ENCODE measurements at regions of chr12 and their contacts with region 1.

Region 1: DNA sequence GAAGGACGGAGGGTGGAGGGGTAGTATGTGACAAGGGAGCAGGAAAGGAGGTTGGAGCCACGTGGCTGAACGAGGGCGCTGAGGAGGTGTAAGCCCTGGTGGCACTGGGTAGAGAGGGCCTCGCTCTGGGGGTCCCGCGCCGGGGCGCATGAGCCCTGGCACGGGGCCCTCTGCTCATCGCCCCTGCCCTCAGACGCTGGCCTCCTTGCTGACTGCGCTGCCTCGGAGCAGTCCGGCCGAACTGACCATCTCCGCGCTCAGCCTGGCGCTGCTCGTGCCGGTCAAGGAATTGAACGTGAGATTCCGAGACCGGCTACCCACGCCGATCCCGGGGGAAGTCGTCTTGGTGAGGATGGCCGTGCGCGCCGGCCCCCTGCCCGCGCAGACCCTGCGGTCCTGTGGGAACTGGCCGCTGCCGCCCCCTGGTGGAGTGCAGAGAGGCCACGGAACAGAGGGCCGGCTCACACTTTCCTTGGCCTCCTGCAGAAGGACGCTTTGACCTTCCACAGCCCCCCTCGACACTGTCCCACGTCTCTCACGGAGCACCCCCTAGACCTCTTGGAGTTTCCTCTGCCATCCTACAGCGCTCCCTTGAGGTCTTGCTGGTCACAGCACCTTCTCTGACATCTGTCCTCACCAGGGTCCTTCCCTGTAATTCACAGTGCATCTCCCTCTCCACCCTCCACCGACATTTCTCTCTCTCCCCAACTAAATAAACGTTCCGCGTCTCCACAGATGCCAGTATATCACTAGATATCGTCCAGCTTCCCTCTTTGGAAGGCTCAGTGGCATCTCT is 10.5 kb downstream of the ARHGEF25 start:
- DNase-seq: peak; percentile 81
- H3K4me3 ChIP-seq: peak overlapping the region in 3 of 4 donors; percentile 40 to 48 (median 44)
- H3K27ac ChIP-seq: no peak overlapping the region
- H3K4me1 ChIP-seq: peaks cover 0 to 17% (median 15%) of the 10 kb centered on the region in 4 donors
- H3K27me3 ChIP-seq: peaks cover 0 to 59% (median 4%) of the 10 kb centered on the region in 3 donors
- CTCF ChIP-seq: peak; percentile 93 to 96 (median 94)
- EP300 ChIP-seq: no peak
- POLR2A ChIP-seq: no peak

Region 2: GRCh38 chr12:57583008-57583831 is 38.5 kb before region 1 on chr12:
- intact Hi-C with region 1: loop called (anchors 1 kb)
- DNase-seq: peak; percentile 86
- H3K4me3 ChIP-seq: no peak overlapping the region
- H3K27ac ChIP-seq: no peak overlapping the region
- H3K4me1 ChIP-seq: no peaks in the 10 kb centered on the region
- H3K27me3 ChIP-seq: peaks cover 0 to 3% (median 0%) of the 10 kb centered on the region in 3 donors
- CTCF ChIP-seq: peak; percentile 96 to 97 (median 97)
- EP300 ChIP-seq: no peak
- POLR2A ChIP-seq: no peak

Region 3: GRCh38 chr12:57815177-57816000 is 193.7 kb after region 1 on chr12:
- intact Hi-C with region 1: no loop called
- DNase-seq: no peak
- H3K4me3 ChIP-seq: no peak overlapping the region
- H3K27ac ChIP-seq: peak overlapping the region in 1 of 4 donors; percentile 54
- H3K4me1 ChIP-seq: peaks cover 5 to 61% (median 39%) of the 10 kb centered on the region in 4 donors
- H3K27me3 ChIP-seq: no peaks in the 10 kb centered on the region
- CTCF ChIP-seq: no peak
- EP300 ChIP-seq: no peak
- POLR2A ChIP-seq: no peak

Measured in sigmoid colon (tissue), 7 donors.